WTC11 (cell line): ENCODE measurements at regions of chr14 and their contacts with region 1.

Region 1: DNA sequence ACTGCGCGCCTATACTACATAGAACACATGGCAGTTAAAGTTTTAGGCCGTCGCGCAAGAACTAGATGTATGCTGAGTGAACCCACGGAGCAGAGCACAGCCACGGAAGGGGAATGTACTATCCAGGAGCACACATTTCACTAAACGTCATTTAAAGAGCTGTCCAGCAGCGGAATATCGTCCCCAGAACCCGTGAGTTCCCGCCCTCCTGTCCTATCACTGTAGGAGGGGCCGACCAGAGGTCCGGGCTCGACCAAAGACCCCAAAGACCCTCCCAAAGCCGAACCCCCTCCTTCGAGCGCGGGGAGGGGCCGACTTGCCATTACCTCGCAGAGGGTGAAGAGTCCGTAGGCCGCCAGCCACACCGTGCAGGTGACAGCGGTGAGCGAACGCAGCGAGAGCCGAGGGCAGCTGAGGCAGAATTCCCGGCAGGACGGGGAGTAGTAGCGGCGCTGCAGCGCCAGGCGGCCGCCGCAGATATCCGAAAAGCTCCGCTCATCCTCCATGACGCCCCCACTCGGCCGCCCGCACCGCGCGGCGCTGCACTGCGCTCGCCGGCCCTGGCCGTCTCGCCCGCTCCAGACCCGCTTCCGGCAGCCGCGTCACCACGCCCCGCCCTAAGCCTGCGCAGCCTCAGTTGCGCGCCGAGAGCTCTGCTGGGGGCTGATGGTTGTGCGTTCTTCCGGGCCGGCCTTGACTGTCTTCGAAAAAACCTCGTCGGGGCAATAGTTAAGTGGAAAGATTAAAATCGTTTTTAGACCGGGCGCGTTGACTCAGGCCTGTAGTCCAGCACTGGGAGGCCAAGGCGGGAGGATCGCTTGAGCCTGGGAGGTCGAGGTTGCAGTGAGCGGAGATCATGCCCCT is at the start of gene PIGH:
- DNase-seq: peak; percentile 92
- ATAC-seq: peak; percentile 97
- H3K4me3 Mint-ChIP-seq: peak within 1 kb of the TSS; percentile 90
- H3K27ac Mint-ChIP-seq: peak within 1 kb of the TSS; percentile 88
- H3K4me1 Mint-ChIP-seq: peaks cover 8% of the 10 kb centered on the region
- H3K27me3 Mint-ChIP-seq: peaks cover 56% of the 10 kb centered on the region
- CTCF ChIP-seq: 0 out of 2 replicates have a peak, but pooled peaks have one; percentile 22
- total RNA-seq, gene PIGH: 6.6 to 7.8 TPM (median 6.8 TPM) in 3 replicates

Region 2: GRCh38 chr14:67232081-67232480 is 367.8 kb before region 1 on chr14:
- CTCF ChIA-PET with region 1: no interaction called
- POLR2A ChIA-PET with region 1: no interaction called
- DNase-seq: no peak
- ATAC-seq: 0 out of 2 replicates have a peak, but pooled peaks have one; percentile 18
- H3K4me3 Mint-ChIP-seq: no peak overlapping the region
- H3K27ac Mint-ChIP-seq: no peak overlapping the region
- H3K4me1 Mint-ChIP-seq: no peaks in the 10 kb centered on the region
- H3K27me3 Mint-ChIP-seq: peaks cover 2% of the 10 kb centered on the region
- CTCF ChIP-seq: no peak

Region 3: DNA sequence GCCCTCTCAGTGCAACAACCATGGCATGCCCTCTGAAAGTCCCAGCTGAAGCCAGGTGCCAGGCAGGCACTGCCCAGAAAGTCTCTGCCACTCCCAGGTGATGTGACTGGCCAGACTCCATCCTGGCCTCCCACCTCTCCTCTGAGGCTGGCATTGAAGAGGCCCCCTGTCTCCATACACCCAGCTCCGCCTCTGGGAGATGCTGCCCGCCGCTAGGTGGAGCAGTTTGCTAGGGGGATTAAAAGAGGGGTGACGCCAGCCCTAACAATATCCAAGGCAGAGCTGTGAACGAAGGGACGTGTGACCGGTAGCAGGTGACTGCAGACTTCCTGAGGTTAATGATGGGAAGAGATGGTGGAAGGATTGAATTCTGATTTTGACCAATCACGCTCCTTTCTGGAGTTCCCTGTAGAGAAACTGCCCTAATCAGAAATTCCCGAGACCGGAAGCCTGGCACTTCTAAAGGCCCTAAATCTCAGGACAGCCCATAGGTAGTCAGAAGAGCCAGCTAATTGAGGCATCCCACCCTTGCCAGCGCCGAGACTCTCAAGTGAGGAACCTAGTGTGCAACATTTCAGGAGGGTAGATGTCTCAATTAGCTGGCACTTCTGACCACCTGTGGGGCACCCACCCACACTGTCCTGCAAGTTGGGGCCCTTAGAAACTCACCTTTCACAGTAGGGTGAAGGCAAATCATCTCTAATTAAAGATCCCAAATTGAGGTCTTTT is 179.7 kb before region 1 on chr14:
- CTCF ChIA-PET with region 1: interaction called, 10 read pairs
- POLR2A ChIA-PET with region 1: interaction called, 3 read pairs
- DNase-seq: peak; percentile 85
- ATAC-seq: peak; percentile 93
- H3K4me3 Mint-ChIP-seq: no peak overlapping the region
- H3K27ac Mint-ChIP-seq: no peak overlapping the region
- H3K4me1 Mint-ChIP-seq: no peaks in the 10 kb centered on the region
- H3K27me3 Mint-ChIP-seq: no peaks in the 10 kb centered on the region; the same call in 1 of the 2 replicates
- CTCF ChIP-seq: peak; percentile 62; the same call in 1 of the 2 replicates

Region 4: DNA sequence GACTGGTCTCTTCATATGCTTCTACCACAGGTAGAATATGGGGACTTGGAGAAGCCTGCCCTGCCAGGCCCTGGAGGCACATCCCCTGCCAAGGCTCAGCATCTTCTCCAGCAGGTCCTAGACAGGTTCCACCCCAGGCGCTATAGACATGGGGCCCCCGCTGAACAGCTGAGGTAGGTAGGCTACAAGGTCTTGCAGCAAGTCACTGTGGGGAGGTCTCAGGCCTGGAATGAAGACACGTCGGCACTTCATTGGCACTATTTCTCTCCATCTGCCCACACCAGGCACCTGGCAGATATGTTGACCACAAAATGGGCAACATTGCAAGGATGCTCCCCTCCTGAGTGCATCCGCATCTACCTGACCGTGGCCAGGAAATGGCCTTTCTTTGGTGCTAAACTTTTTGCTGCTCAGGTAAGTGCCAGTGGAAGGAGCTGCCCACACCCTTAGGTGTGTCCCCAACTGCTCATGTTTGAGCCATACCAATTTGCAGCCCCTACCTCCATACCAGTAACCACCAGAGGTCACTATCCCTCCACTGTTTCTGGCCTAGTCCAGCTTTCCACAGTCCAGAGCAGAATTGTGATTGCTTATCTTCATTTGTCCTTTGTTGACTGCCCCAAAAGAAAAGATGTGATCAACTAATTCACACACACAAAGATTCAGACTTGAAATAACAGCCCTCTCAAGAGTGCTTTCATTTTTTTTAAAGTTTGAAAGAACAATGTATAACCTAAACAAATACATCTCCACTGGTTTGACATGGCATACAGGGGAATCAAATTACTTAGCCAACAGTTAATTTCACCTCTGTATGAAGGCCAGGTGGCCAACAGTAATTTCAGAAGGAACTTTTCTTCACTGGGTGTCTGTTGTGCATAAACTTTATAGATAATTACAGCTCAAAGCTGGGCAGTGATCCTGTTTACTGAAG is 16.0 kb before region 1 on chr14:
- CTCF ChIA-PET with region 1: interaction called, 17 read pairs
- POLR2A ChIA-PET with region 1: no interaction called
- DNase-seq: peak; percentile 29
- ATAC-seq: peak; percentile 92
- H3K4me3 Mint-ChIP-seq: no peak overlapping the region
- H3K27ac Mint-ChIP-seq: no peak overlapping the region
- H3K4me1 Mint-ChIP-seq: no peaks in the 10 kb centered on the region
- H3K27me3 Mint-ChIP-seq: no peaks in the 10 kb centered on the region
- CTCF ChIP-seq: peak; percentile 36; the same call in 1 of the 2 replicates

Region 5: DNA sequence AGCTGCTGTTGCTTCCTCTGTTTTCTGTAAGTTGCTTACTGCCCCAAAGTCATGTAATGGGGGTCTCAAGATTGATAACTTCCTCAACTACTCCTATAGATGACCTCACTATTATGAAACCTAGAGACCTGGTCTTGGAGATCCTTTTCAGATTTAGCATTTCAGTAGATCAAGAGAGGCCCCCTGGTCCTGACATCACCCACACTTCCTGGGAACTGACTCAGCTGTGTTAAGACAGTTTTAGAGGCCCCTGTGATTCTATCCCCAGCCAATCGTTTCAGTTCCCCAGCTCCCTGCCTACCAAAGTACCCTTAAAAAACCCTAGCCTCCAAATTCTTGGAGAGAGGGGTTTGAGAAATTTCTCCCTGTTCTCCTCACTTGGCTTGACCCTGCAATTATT is 10.6 kb after region 1 on chr14:
- CTCF ChIA-PET with region 1: interaction called, 11 read pairs
- POLR2A ChIA-PET with region 1: interaction called, 4 read pairs
- DNase-seq: no peak
- ATAC-seq: no peak
- H3K4me3 Mint-ChIP-seq: no peak overlapping the region
- H3K27ac Mint-ChIP-seq: no peak overlapping the region
- H3K4me1 Mint-ChIP-seq: peaks cover 13% of the 10 kb centered on the region
- H3K27me3 Mint-ChIP-seq: peaks cover 97% of the 10 kb centered on the region
- CTCF ChIP-seq: no peak

Region 6: DNA sequence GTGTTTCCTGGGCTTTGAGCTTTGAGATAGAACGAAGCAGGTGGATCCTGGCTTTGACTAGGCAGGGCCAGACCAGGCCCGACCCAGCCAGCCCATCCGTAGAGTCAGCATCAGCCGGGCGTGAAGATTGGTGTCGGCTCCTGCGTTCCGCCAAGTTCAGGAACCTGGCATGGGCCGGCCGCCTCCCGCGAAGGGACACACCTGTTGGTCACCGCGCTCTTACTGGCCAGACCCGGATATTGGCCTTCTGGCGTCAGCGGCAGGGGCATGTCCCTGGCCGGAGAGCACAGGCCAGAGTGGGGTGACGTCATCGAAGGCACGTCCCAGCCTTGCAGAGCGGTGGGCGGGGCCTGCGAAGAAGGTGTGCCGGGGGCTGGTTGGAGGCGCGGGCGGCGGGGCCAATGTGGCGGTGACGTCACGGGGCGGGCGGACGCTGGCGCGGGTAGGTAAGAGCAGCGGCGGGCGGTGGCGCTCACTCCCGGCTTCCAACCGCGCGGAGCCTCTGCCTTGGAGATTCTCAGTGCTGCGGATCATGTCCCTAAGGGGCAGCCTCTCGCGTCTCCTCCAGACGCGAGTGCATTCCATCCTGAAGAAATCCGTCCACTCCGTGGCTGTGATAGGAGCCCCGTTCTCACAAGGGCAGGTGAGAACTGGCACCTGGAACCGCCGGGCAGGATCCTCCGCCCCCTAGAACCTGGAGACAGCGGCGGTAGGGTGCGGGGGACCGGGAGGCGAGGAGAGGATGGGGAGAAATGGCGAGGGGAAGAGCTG is 19.7 kb after region 1 on chr14 and contains the start of gene ARG2:
- CTCF ChIA-PET with region 1: interaction called, 40 read pairs
- POLR2A ChIA-PET with region 1: interaction called, 25 read pairs
- DNase-seq: peak; percentile 100
- ATAC-seq: peak; percentile 91
- H3K4me3 Mint-ChIP-seq: peak within 1 kb of the TSS; percentile 92
- H3K27ac Mint-ChIP-seq: peak within 1 kb of the TSS; percentile 92
- H3K4me1 Mint-ChIP-seq: peaks cover 35% of the 10 kb centered on the region
- H3K27me3 Mint-ChIP-seq: peaks cover 46% of the 10 kb centered on the region
- CTCF ChIP-seq: no peak
- total RNA-seq, gene ARG2: 29.8 to 38.5 TPM (median 33.0 TPM) in 3 replicates

Region 7: DNA sequence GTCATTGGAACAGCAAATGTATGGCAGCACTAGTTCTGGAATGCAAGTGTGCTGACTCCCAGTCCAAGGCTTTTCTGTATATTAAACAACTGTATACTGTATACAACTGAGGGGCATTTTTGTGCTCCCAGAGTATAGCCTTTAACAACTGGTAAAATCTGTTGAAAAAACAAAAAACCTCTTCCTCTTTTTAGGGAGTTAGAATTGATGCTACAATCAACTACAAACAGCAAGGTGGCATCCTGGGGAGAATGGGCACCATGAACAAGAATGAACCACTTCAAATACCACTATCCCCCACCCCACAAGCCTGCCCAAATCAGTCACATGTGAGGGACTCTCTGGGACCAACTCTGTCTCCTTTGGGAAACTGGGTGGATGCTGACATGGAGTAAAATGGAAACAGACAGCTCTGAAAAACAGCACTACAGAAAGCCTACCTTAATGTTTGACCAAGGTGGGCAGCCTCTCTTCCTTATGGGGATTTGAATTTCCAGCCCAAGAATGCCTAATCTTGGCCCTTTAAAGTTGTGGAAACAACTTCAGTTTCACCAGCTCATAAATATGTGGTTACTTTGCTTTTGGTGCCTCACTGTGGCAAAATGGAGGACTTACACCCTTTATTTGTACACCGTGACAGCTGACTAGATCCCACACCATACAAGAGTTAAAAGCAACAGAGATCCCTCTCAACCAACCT is 67.0 kb after region 1 on chr14:
- CTCF ChIA-PET with region 1: interaction called, 30 read pairs
- POLR2A ChIA-PET with region 1: no interaction called
- DNase-seq: no peak
- ATAC-seq: peak; percentile 93
- H3K4me3 Mint-ChIP-seq: no peak overlapping the region
- H3K27ac Mint-ChIP-seq: peak overlapping the region; percentile 85
- H3K4me1 Mint-ChIP-seq: peaks cover 13% of the 10 kb centered on the region
- H3K27me3 Mint-ChIP-seq: no peaks in the 10 kb centered on the region
- CTCF ChIP-seq: no peak

Region 8: DNA sequence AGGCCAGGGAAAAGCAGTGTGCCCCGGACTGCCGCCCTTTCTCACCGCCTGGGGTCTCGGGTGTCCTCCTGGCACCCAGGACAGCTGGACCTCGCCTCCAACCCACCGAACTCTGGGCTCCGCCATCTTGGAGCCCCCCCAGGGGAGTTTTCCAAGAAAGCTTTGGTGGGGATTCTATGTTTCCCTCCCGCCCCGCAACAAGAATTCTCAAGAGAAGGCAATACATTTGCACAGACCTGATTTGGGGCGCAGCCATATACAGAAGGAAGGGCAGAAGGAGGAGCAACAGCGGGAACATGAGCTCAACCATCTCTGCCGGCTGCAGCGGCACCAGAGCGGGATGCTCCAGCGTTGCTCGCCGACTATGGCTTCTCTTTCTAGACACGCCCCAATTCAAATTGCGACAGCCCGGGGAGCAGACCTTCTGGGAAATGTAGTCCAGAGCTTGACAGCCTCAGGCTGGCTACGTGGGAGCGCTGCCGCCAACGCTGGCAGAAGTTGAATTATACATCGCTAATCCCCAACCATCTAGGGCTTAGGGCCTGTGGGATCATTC is 95.5 kb after region 1 on chr14 and contains the start of gene RDH11:
- CTCF ChIA-PET with region 1: interaction called, 11 read pairs
- POLR2A ChIA-PET with region 1: interaction called, 9 read pairs
- DNase-seq: peak; percentile 86
- ATAC-seq: peak; percentile 93
- H3K4me3 Mint-ChIP-seq: peak within 1 kb of the TSS; percentile 96
- H3K27ac Mint-ChIP-seq: peak within 1 kb of the TSS; percentile 99
- H3K4me1 Mint-ChIP-seq: peaks cover 11% of the 10 kb centered on the region
- H3K27me3 Mint-ChIP-seq: peaks cover 11% of the 10 kb centered on the region
- CTCF ChIP-seq: no peak
- total RNA-seq, gene RDH11: 103 to 114 TPM (median 110 TPM) in 3 replicates

Region 9: GRCh38 chr14:67816326-67817002 is 216.5 kb after region 1 on chr14 and contains the start of gene ZFYVE26:
- CTCF ChIA-PET with region 1: no interaction called
- POLR2A ChIA-PET with region 1: no interaction called
- DNase-seq: peak; percentile 90
- ATAC-seq: peak; percentile 90
- H3K4me3 Mint-ChIP-seq: peak within 1 kb of the TSS; percentile 83
- H3K27ac Mint-ChIP-seq: peak within 1 kb of the TSS; percentile 94
- H3K4me1 Mint-ChIP-seq: peaks cover 34% of the 10 kb centered on the region
- H3K27me3 Mint-ChIP-seq: no peaks in the 10 kb centered on the region
- CTCF ChIP-seq: no peak
- total RNA-seq, gene ZFYVE26: 18.8 to 25.8 TPM (median 20.9 TPM) in 3 replicates